ENCODE measurements at regions of chr15 and their contacts with region 1.

Region 1: DNA sequence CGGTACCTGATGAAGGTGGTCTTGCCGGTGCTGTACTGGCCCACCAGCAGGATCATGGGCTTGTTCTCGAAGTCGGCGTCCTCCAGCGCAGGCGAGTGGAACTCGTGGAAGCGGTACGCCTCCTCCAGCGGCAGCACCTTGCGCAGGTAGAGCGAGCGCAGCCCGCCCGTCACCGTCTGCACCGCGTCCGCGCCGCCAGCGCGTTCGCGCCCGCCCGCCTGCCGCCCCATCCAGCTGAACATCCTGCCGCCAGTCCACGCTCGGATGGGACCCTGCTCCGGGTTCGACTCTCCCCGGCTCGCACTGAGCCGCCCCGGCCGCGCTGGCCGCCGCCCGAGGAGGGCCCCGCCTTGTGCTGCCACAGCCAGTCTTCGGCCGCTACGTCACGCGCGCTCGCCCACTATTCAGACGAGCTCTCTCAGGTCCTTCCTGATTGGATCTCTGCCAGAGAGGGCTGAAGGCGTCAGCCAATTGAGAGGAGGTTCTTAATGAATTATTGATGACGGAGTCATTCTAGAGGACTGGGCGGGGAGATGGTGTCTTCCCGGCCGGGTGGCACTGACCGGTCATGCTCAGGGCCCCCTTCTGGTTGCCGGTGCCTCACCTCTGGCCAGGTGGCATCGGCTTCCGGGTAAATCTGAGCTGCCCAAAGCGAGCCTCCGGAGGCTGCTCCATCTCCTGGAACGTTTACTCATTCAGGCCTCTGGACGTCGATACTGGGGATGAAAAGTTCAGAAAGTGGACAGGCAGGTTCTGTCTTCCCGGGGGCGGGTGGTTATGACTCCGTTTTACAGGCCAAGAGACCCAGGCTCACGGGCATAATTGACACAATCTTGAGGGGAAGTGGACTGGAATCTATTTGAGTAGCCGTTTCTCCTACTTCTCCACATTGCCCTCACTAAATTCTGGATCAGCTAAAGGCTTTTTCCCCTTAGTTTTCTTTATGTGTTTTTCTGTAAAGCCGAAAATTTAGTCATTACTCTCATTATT is at the start of gene EHD4:
- DNase-seq: peak; percentile 97
- ATAC-seq: peak; percentile 93
- H3K4me3 Mint-ChIP-seq: peak within 1 kb of the TSS; percentile 85
- H3K27ac Mint-ChIP-seq: peak within 1 kb of the TSS; percentile 89
- H3K4me1 Mint-ChIP-seq: peaks cover 29% of the 10 kb centered on the region
- H3K27me3 Mint-ChIP-seq: no peaks in the 10 kb centered on the region; the same call in 1 of the 2 replicates
- CTCF ChIP-seq: no peak
- total RNA-seq, gene EHD4: 20.8 to 23.9 TPM (median 21.3 TPM) in 3 replicates

Region 2: DNA sequence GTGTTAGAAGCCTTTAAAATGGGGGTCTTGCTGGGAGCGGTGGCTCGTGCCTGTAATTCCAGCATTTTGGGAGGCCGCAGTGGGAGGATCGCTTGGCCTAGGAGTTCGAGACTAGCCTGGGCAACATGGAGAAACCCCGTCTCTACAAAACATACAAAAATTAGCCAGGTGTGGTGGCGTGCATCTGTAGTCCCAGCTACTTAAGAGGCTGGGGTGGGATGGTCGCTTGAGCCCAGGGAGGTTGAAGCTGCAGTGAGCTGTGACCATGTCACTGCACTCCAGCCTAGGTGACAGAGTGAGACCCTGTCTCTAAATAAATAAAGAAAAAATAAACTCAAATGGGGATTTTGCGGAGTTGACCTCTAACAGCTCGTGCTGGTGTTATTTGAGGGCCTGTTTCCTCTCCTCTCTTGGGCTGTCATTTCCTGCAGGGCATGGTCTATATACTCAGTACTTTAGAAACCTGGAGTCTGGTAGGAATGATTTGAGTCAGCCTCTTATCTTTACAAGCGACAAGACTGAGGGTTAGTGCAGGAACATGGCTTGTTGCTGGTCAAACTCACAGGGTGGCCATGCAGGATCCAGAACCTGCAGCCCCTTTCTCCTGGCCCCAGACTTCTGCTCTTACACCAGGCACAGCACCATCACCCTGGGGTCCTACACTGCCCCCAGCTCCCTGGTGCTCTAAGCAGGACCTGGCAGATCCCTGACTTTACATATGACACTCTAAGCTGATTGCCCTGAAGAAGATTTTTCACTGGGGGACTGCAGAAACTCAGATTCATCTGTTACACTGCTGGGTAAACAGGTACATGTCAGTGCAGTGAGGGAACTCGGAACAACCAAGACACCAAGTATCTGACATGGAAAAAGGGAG is 15.3 kb before region 1 on chr15:
- CTCF ChIA-PET with region 1: interaction called, 17 read pairs
- POLR2A ChIA-PET with region 1: no interaction called
- DNase-seq: no peak
- ATAC-seq: no peak
- H3K4me3 Mint-ChIP-seq: no peak overlapping the region
- H3K27ac Mint-ChIP-seq: peak overlapping the region; percentile 69
- H3K4me1 Mint-ChIP-seq: peaks cover 19% of the 10 kb centered on the region
- H3K27me3 Mint-ChIP-seq: no peaks in the 10 kb centered on the region
- CTCF ChIP-seq: no peak